ENCODE measurements at regions of chr6 and their contacts with region 1.

Region 1: GRCh38 chr6:3068329-3069214 is at the start of gene RIPK1:
- DNase-seq: peak; percentile 95
- ATAC-seq: peak; percentile 73
- H3K4me3 ChIP-seq: peak within 1 kb of the TSS; percentile 55 to 87 (median 85)
- H3K4me3 Mint-ChIP-seq: peak within 1 kb of the TSS; percentile 98
- H3K27ac ChIP-seq: peak within 1 kb of the TSS; percentile 92 to 99
- H3K27ac Mint-ChIP-seq: peak within 1 kb of the TSS; percentile 99
- H3K4me1 ChIP-seq: peaks cover 17 to 23% of the 10 kb centered on the region in 2 donors
- H3K4me1 Mint-ChIP-seq: peaks cover 43% of the 10 kb centered on the region
- H3K27me3 ChIP-seq: no peaks in the 10 kb centered on the region
- H3K27me3 Mint-ChIP-seq: no peaks in the 10 kb centered on the region
- CTCF ChIP-seq: no peak
- total RNA-seq, gene RIPK1: 26.2 and 28.1 TPM in 2 replicates

Region 2: DNA sequence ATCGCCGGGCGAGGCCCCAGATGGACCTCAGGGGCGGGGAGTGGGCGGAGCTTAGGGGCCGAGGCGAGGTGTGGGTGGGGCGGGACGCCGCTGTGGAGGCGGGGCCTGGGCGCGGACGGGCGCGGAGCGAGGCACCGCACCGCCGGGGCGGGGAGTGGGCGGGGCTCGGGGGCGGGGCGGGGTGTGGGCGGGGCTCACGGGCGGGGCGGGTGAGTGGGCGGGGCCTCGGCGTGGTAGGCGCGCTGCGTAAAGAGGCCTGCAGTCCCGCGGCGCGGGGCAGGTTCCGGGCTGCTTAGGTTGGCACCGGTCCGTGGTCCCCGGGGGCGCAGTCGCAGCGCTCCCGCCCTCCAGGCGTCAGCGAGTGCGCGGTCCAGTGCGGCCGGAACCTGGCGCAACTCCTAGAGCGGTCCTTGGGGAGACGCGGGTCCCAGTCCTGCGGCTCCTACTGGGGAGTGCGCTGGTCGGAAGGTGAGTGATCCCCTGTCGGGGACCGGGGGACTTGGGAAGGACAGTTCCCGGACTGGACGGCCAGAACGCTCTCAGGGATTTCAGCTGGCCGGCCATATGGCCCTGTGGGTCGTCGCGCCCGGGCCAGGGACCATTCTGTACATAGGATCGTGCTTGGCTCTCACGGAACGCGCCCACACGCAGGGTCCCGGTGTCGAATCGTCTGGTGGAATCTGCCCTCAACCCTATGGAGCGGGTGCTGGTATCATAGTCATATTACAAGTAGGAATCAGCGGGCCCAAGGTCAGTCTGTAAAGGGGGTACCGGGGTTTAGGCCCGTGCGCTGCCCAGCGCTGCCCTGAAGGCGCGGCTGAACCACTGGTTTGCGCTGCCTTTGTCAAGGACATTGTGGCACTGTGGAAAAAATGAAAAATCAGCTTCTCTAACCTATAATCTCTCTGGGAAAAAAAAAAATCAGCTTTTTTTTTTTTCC is 68.7 kb before region 1 on chr6 and contains the start of gene NQO2:
- CTCF ChIA-PET with region 1: interaction called, 9 read pairs
- POLR2A ChIA-PET with region 1: interaction called, 7 read pairs
- intact Hi-C with region 1: loop called (anchors 1 kb)
- DNase-seq: peak; percentile 92
- ATAC-seq: peak; percentile 88
- H3K4me3 ChIP-seq: peak within 1 kb of the TSS; percentile 65 to 91 (median 85)
- H3K4me3 Mint-ChIP-seq: peak within 1 kb of the TSS; percentile 96
- H3K27ac ChIP-seq: peak within 1 kb of the TSS; percentile 65 to 71
- H3K27ac Mint-ChIP-seq: peak within 1 kb of the TSS; percentile 89
- H3K4me1 ChIP-seq: peaks cover 11 to 21% of the 10 kb centered on the region in 2 donors
- H3K4me1 Mint-ChIP-seq: peaks cover 20% of the 10 kb centered on the region
- H3K27me3 ChIP-seq: no peaks in the 10 kb centered on the region
- H3K27me3 Mint-ChIP-seq: no peaks in the 10 kb centered on the region
- CTCF ChIP-seq: no peak
- total RNA-seq, gene NQO2: 17.9 and 21.5 TPM in 2 replicates

Region 3: DNA sequence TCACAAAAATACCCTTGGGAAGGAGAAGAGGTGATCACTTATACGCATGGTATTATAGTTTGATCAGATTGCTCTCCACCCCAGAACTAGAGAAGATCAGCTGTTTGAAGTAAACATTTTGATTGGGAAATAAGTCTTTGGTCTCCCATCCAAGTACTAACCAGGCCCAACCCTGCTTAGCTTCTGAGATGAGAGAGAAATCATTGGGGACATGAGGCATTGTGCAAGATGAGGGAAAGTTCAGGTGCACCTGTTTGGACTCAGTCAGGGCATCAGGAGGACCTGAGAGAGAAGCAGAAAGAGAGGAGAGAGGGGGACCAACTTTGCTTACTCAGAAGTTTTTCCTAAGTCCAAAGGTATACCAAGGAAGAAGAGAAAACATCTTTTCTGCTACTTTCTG is 11.1 kb after region 1 on chr6:
- CTCF ChIA-PET with region 1: no interaction called
- POLR2A ChIA-PET with region 1: interaction called, 14 read pairs
- intact Hi-C with region 1: no loop called
- DNase-seq: no peak
- ATAC-seq: no peak
- H3K4me3 ChIP-seq: no peak overlapping the region
- H3K4me3 Mint-ChIP-seq: no peak overlapping the region
- H3K27ac ChIP-seq: no peak overlapping the region
- H3K27ac Mint-ChIP-seq: no peak overlapping the region
- H3K4me1 ChIP-seq: peaks cover 13 to 15% of the 10 kb centered on the region in 2 donors
- H3K4me1 Mint-ChIP-seq: peaks cover 21% of the 10 kb centered on the region
- H3K27me3 ChIP-seq: no peaks in the 10 kb centered on the region
- H3K27me3 Mint-ChIP-seq: no peaks in the 10 kb centered on the region
- CTCF ChIP-seq: no peak